Spleen (tissue), 13 donors: ENCODE measurements at regions of chr20 and their contacts with region 1.

Region 1: GRCh38 chr20:14055127-14055742 is 59.9 kb downstream of the MACROD2 start:
- DNase-seq: no peak
- H3K4me3 ChIP-seq: no peak overlapping the region
- H3K27ac ChIP-seq: no peak overlapping the region
- H3K4me1 ChIP-seq: no peaks in the 10 kb centered on the region
- H3K27me3 ChIP-seq: no peaks in the 10 kb centered on the region
- CTCF ChIP-seq: peak in 9 of 11 experiments; percentile 6 to 65 (median 57)
- POLR2A ChIP-seq: no peak

Region 2: DNA sequence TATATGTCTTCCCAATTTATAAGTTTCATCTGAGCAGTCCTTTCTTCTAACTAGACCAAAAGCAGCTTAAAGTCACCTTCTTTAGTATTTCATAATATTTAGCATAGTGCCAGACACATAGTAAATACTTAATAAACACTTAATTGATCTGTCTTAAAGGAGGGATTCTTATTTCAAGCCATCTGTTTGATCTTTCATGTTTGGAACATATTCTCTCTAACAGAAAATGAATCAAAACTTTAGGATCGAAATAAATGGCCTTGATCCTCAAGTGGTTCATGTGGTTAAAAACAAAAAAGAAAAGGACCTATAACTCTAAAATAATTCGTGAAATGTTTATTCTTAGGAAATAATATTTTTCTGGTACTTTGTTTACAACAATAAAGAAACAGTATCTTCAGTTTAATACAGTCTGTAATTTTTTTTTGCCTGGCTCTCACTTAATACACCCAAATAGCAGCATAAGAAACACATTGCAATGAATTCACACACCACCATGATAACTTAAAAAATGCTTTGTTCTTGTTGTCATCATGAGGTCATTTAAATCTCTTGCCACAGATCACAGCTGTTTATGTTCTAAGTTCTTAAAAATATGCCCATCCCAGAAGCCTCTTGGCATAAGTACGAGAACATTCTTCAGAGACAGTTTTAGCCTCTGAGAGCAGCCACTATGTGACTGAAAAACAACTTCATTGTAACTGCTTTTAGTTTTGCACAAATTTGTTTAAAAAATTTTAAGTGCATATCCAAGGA is 318.6 kb before region 1 on chr20:
- intact Hi-C with region 1: no loop called
- DNase-seq: no peak
- H3K4me3 ChIP-seq: no peak overlapping the region
- H3K27ac ChIP-seq: peak overlapping the region in 6 of 8 donors; percentile 1 to 55 (median 35)
- H3K4me1 ChIP-seq: peaks cover 0 to 4% (median 0%) of the 10 kb centered on the region in 6 donors
- H3K27me3 ChIP-seq: no peaks in the 10 kb centered on the region
- CTCF ChIP-seq: no peak
- POLR2A ChIP-seq: no peak

Region 3: DNA sequence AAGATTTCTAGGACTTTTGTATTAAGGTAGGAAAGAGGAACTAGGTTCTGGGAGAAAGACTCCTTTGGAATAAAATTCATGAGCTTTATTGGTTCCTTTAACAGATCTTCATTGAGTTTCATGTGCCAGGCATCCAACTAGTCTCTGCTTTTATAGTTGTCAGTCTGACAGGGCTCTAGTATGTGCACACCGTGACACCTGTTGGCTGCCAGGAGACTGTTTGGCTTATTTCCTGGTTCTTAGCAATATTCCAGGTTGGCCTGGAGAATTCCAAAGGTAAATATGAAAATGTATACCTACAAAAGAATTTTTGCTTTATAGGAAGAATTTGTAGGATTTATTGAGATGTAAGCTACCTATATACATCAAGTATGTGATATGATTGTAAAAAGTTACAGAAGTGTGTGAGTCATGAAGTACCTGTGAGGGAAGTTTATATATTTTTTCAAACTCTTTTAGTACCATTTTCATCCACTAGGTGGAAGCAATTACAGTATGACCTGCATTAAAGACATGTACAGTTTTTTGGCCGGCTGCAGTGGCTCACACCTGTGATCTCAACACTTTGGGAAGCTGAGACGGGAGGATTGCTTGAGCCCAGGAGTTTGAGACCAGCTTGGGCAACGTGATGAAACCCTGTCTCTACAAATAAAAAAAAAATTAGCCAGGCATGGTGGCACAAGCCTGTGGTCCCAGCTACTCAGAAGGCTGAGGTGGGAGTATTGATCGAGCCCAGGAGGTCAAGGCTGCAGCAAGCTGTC is 235.2 kb before region 1 on chr20:
- intact Hi-C with region 1: loop called (anchors 5 kb)
- DNase-seq: no peak
- H3K4me3 ChIP-seq: no peak overlapping the region
- H3K27ac ChIP-seq: no peak overlapping the region
- H3K4me1 ChIP-seq: no peaks in the 10 kb centered on the region
- H3K27me3 ChIP-seq: no peaks in the 10 kb centered on the region
- CTCF ChIP-seq: peak in 9 of 11 experiments; percentile 22 to 72 (median 57)
- POLR2A ChIP-seq: no peak